Naive thymus-derived CD4-positive, alpha-beta T cell (primary cell): ENCODE measurements at regions of chr7 and their contacts with region 1.

Region 1: GRCh38 chr7:99040104-99040958 is 103.6 kb downstream of the SMURF1 start:
- DNase-seq: peak; percentile 33 to 69 (median 59)
- ATAC-seq: peak; percentile 82
- H3K4me3 ChIP-seq: no peak overlapping the region
- H3K4me3 Mint-ChIP-seq: no peak overlapping the region
- H3K27ac ChIP-seq: no peak overlapping the region
- H3K27ac Mint-ChIP-seq: peak overlapping the region in 4 of 9 donors; percentile 19 to 70 (median 64)
- H3K4me1 ChIP-seq: no peaks in the 10 kb centered on the region
- H3K4me1 Mint-ChIP-seq: peaks cover 0 to 7% (median 0%) of the 10 kb centered on the region in 7 donors
- H3K27me3 ChIP-seq: no peaks in the 10 kb centered on the region
- H3K27me3 Mint-ChIP-seq: no peaks in the 10 kb centered on the region

Region 2: GRCh38 chr7:99312316-99313203 is 272.2 kb after region 1 on chr7:
- CTCF ChIA-PET with region 1: interaction called, 10 read pairs
- POLR2A ChIA-PET with region 1: no interaction called
- intact Hi-C with region 1: loop called (anchors 1 kb)
- DNase-seq: peak; percentile 41 to 75 (median 61)
- ATAC-seq: peak; percentile 93
- H3K4me3 ChIP-seq: no peak overlapping the region
- H3K4me3 Mint-ChIP-seq: peak overlapping the region in 4 of 10 donors; percentile 20 to 71 (median 54)
- H3K27ac ChIP-seq: no peak overlapping the region
- H3K27ac Mint-ChIP-seq: peak overlapping the region in 1 of 9 donors; percentile 15
- H3K4me1 ChIP-seq: peaks cover 0 to 3% of the 10 kb centered on the region in 2 donors
- H3K4me1 Mint-ChIP-seq: peaks cover 4 to 20% (median 4%) of the 10 kb centered on the region in 7 donors
- H3K27me3 ChIP-seq: no peaks in the 10 kb centered on the region
- H3K27me3 Mint-ChIP-seq: peaks cover 0 to 3% (median 0%) of the 10 kb centered on the region in 5 donors